ENCODE measurements at regions of chr17 and their contacts with region 1.

Region 1: DNA sequence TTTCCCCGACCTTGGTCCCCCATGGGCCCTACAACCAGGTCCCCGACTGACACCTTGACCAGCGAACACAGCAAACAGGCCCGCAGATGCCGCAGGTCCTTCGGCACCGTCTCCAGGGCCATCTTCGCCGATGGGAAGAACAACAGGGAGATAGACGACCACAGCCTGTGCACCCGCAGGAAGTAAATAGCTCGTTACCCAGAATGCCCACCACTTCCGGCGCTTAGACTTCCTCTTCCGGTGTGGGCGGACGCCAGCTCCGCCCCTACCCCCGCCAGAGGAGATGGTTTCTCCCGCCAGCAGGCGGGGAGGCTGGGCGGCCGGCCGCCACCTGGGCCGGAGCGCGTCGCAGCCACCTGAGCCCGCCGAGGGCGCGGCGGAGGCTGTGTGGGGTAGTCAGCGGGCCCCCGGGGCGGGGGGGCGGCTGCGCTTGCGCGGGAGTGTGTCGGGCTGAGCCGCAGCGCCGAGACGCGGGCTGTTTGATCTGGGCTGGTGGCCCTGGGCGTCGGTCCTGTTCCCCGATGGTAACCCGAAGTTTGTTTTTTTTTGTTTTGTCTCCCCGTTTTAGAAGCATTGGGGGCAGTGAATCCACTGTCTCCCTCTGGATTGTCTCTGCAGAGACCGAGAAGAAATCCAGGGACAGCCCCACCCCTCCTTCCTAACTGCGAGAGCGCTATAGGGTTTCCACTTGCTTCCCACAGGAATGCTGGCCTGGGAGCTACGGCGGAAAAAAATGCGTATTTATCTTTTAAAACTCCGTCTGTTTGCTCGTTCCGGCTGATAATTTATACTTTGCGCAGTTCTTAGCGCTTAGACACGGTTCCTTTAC is at the start of gene SUPT4H1:
- DNase-seq: peak; percentile 89 to 94 (median 92)
- H3K4me3 ChIP-seq: peak within 1 kb of the TSS; percentile 42 to 85 (median 72)
- H3K27ac ChIP-seq: peak within 1 kb of the TSS; percentile 80 to 93 (median 89)
- H3K4me1 ChIP-seq: peaks cover 7 to 16% of the 10 kb centered on the region in 2 donors
- H3K27me3 ChIP-seq: no peaks in the 10 kb centered on the region
- CTCF ChIP-seq: peak in 3 of 6 experiments; percentile 18 to 41 (median 18)
- POLR2A ChIP-seq: peak; percentile 85 to 88
- total RNA-seq, gene SUPT4H1: 65.5 to 149 (median 96.5) TPM

Region 2: DNA sequence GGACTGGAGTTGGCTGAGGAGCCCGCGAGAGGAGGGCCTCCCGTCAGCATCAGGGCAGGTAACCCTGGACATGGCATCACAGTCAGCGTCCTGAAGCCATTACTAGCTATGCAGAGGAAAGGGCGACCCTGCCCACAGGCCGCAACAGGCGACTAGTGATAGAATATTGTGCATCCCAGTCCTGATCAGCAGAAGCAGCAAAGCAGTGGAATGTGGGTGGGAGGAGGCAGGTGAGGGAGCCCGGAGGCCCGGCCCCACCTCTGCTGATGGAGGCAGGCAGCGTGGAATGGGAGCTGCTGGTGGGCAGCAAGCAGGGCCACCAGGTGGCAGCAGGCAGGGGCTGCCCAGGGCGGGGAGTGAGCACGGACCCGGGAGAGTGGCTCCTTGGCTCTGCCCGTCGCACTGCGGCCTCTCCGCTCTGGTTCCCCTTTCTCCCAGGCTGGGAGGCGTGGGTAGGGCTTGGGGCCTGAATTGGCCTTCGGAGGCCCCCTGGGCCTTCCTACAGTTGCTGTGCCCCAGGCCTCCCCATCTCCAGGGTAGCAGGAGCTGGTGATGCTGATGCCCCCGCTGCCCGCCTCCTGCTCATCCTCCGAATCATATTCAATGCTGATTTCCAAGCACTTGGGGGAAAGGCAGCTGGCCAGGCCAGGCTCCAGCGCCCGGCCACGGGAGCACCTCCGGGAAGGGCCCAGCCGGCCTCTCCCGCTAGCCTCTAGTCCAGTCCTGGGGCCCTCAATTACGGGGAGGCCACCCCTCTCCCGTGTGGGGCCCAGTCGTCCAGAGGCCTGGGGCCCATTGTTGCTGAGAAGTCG is 43.8 kb before region 1 on chr17:
- intact Hi-C with region 1: loop called in 1 of 2 experiments (anchors 5 kb)
- DNase-seq: peak in 4 of 7 donors; percentile 12 to 40 (median 18)
- H3K4me3 ChIP-seq: no peak overlapping the region
- H3K27ac ChIP-seq: no peak overlapping the region
- H3K4me1 ChIP-seq: no peaks in the 10 kb centered on the region
- H3K27me3 ChIP-seq: no peaks in the 10 kb centered on the region
- CTCF ChIP-seq: peak in 2 of 6 experiments; percentile 23 to 25
- POLR2A ChIP-seq: no peak

Region 3: DNA sequence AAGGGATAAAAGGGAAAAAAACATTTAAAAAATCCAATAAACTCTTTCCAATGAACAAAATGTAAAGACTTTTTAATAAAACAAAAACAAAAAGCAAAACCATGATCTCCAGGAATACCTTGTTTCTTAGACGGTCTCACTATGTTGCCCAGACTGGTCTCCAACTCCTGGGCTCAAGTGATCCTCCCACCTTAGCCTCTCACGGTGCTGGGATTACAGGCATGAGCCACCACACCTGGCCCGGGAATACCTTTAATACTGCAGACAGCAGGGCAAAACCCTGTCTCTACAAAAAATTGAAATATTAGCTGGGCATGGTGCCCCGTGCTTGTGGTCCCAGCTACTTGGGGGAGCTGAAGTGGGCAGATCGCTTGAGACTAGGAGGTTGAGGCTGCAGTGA is 57.2 kb after region 1 on chr17:
- intact Hi-C with region 1: no loop called
- DNase-seq: no peak
- H3K4me3 ChIP-seq: no peak overlapping the region
- H3K27ac ChIP-seq: no peak overlapping the region
- H3K4me1 ChIP-seq: peaks cover 4 to 17% of the 10 kb centered on the region in 2 donors
- H3K27me3 ChIP-seq: no peaks in the 10 kb centered on the region
- CTCF ChIP-seq: no peak
- POLR2A ChIP-seq: no peak

Region 4: DNA sequence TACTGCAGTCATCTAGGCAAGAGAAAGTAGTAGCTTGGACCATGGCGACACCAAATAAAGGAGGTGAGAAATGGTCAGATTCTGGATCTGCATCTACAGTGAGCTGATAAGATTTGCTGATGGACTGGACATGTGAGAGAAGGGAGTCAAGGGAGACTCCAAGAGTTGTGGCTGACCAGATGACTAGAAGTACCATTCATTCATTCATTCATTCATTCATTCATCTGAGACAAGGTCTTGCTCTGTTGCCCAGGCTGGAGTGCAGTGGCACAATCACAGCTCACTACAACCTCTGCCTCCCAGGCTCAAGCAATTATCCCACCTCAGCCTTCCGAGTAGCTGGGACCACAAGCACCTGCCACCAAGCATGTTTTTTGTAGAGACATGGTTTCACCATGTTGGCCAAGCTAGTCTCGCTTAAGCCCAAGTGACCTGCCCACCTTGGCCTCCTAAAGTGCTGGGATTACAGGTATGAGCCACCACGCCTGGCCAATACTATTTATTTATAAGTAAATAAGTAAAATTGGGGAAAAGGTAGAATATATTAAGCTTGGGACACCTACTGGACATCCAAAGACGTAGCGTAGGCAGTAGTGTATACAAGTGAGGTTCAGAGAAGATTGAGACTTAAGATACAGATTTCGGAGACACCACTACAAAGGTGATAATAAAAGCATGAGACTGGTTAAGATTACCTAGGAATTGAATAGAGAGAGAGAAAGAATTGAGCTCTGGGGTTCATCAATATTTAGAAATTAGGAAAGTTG is 80.8 kb after region 1 on chr17:
- intact Hi-C with region 1: no loop called
- DNase-seq: no peak
- H3K4me3 ChIP-seq: no peak overlapping the region
- H3K27ac ChIP-seq: no peak overlapping the region
- H3K4me1 ChIP-seq: no peaks in the 10 kb centered on the region
- H3K27me3 ChIP-seq: no peaks in the 10 kb centered on the region
- CTCF ChIP-seq: no peak
- POLR2A ChIP-seq: no peak

Measured in adrenal gland (tissue), 19 donors.